ENCODE measurements at regions of chr16 and their contacts with region 1.

Region 1: GRCh38 chr16:50024684-50025536 is at the start of gene CNEP1R1:
- DNase-seq: peak; percentile 95
- H3K4me3 ChIP-seq: peak within 1 kb of the TSS; percentile 99 to 100
- H3K27ac ChIP-seq: peak within 1 kb of the TSS; percentile 77 to 79
- H3K4me1 ChIP-seq: no peaks in the 10 kb centered on the region
- H3K27me3 ChIP-seq: no peaks in the 10 kb centered on the region
- CTCF ChIP-seq: peak; percentile 99 to 100 (median 100)
- POLR2A ChIP-seq: peak; percentile 49
- total RNA-seq, gene CNEP1R1: 9.7 to 41.9 TPM

Region 2: DNA sequence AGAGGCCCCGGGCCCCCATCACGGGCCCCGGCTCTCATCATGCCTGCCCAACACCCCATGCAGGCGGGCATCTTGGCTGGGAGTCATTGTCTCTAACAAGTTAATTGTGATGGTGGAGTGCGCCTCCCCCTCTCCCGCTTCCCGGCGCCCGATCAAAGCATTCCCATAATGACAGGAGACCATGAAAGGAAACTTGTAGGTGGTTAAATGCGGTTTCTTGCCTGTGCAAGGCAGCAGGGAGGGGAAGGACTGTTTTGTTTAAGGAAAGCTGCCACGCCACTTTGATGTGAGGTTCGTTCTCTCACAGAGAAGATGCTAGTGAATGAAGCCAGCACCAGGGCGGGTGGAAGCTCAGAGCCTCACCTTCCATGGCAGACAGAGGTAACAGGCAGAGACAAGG is 605.9 kb before region 1 on chr16:
- intact Hi-C with region 1: no loop called
- DNase-seq: no peak
- H3K4me3 ChIP-seq: no peak overlapping the region
- H3K27ac ChIP-seq: no peak overlapping the region
- H3K4me1 ChIP-seq: no peaks in the 10 kb centered on the region
- H3K27me3 ChIP-seq: no peaks in the 10 kb centered on the region
- CTCF ChIP-seq: no peak
- POLR2A ChIP-seq: no peak

Region 3: GRCh38 chr16:50059669-50060068 is 34.8 kb after region 1 on chr16:
- intact Hi-C with region 1: loop called (anchors 5 kb)
- DNase-seq: no peak
- H3K4me3 ChIP-seq: no peak overlapping the region
- H3K27ac ChIP-seq: no peak overlapping the region
- H3K4me1 ChIP-seq: no peaks in the 10 kb centered on the region
- H3K27me3 ChIP-seq: no peaks in the 10 kb centered on the region
- CTCF ChIP-seq: no peak
- POLR2A ChIP-seq: no peak

Region 4: DNA sequence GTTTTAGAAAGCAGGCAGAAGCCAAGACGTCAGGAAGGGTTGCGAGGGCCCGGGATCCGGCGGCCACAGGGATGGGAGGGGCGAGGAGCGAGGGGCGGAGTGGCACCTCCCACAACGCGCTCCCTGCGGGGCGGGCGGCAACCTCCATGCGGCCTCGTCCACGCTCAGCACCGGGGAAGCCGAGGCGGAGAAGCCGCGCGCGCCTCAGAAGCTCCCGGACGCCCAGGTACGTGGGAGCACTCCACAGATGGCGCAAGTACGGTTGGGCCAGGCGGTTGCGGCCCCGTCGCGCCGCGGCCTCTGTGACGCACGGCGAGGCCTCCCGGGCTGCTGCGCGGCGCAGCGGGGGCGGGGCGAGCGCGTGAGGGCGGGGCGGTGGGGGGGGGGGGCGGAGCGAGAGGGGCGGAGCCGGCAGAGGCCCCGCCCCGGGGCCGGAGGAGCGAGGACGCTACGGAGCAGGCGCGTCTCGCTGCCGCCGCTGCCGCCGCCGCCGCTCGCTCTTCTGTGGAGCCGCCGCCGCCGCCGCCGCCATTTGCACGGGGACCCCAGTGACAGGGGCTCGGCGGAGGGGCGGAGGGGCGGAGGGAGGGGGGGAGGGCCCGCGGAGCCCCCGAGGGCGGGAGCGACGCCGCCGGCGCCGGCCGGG is 128.0 kb after region 1 on chr16 and contains the start of gene TENT4B:
- intact Hi-C with region 1: loop called (anchors 5 kb)
- DNase-seq: peak; percentile 79
- H3K4me3 ChIP-seq: peak within 1 kb of the TSS; percentile 72 to 91
- H3K27ac ChIP-seq: peak within 1 kb of the TSS; percentile 93 to 96
- H3K4me1 ChIP-seq: no peaks in the 10 kb centered on the region
- H3K27me3 ChIP-seq: no peaks in the 10 kb centered on the region
- CTCF ChIP-seq: peak in 1 of 4 experiments; percentile 4
- POLR2A ChIP-seq: peak; percentile 75
- total RNA-seq, gene TENT4B: 11.5 to 15.1 TPM

Region 5: GRCh38 chr16:50210266-50211038 is 185.5 kb after region 1 on chr16:
- intact Hi-C with region 1: loop called (anchors 5 kb)
- DNase-seq: peak; percentile 85
- H3K4me3 ChIP-seq: no peak overlapping the region
- H3K27ac ChIP-seq: no peak overlapping the region
- H3K4me1 ChIP-seq: peaks cover 3% of the 10 kb centered on the region
- H3K27me3 ChIP-seq: no peaks in the 10 kb centered on the region
- CTCF ChIP-seq: peak; percentile 20 to 76 (median 60)
- POLR2A ChIP-seq: no peak

Region 6: DNA sequence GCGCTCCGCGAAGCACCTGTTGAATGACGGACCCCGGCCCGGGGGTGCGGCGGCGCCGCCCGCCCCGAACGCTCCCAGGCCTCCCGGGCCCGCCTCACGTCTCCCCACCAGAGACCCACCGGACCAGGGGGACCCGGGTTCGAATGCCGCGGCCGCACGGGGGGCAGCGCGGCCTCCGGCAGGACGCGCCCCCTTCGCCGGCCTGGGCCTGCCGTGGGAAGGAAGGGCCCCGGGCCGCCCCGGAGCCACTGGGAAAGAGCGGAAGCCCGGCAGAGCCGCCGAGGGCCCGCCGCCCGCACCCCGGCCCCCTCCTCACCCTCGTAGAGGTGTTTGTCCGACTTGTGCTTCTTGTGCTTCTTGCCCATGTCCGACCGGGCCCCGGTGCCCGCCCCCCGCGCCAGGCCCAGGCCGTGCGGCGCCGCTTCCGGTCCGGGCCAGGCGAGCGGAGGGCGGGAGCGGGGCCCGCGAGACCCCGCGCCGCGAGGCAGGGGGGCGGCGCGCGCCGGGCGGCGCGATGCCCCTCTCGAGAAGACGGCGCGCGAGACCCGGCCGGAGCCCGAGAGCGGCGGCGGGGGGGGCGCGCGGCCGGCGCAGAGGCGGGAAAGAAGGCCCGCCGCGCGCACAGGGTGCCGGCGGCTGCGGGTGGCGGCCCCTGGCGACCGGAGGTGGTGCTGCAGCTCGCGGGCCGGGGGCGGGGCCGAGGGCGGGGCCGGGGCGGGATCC is 343.7 kb after region 1 on chr16 and contains the start of gene BRD7:
- intact Hi-C with region 1: loop called (anchors 5 kb)
- DNase-seq: peak; percentile 38
- H3K4me3 ChIP-seq: peak within 1 kb of the TSS; percentile 94
- H3K27ac ChIP-seq: peak within 1 kb of the TSS; percentile 2 to 53
- H3K4me1 ChIP-seq: no peaks in the 10 kb centered on the region
- H3K27me3 ChIP-seq: no peaks in the 10 kb centered on the region
- CTCF ChIP-seq: peak; percentile 19 to 75 (median 50)
- POLR2A ChIP-seq: no peak
- total RNA-seq, gene BRD7: 38.7 to 66.0 TPM

Region 7: GRCh38 chr16:50665128-50665878 is 640.4 kb after region 1 on chr16:
- intact Hi-C with region 1: loop called (anchors 10 kb)
- DNase-seq: peak; percentile 66
- H3K4me3 ChIP-seq: peak overlapping the region; percentile 21
- H3K27ac ChIP-seq: no peak overlapping the region
- H3K4me1 ChIP-seq: no peaks in the 10 kb centered on the region
- H3K27me3 ChIP-seq: no peaks in the 10 kb centered on the region
- CTCF ChIP-seq: peak; percentile 87 to 93 (median 88)
- POLR2A ChIP-seq: no peak

Region 8: GRCh38 chr16:50806099-50807062 is 781.5 kb after region 1 on chr16:
- intact Hi-C with region 1: loop called (anchors 5 kb)
- DNase-seq: peak; percentile 86
- H3K4me3 ChIP-seq: peak overlapping the region in 1 of 2 donors; percentile 23
- H3K27ac ChIP-seq: peak overlapping the region in 1 of 2 donors; percentile 58
- H3K4me1 ChIP-seq: no peaks in the 10 kb centered on the region
- H3K27me3 ChIP-seq: no peaks in the 10 kb centered on the region
- CTCF ChIP-seq: peak; percentile 76 to 95 (median 86)
- POLR2A ChIP-seq: no peak